Activated CD4-positive, alpha-beta T cell treated with anti-CD3 and anti-CD28 coated beads, Interleukin-2, amount 10 ng/mL, durations not matched to agents 24 days and 14 days (primary cell): ENCODE measurements at regions of chr11 and their contacts with region 1.

Region 1: GRCh38 chr11:81658722-81659121 is 1074.9 kb downstream of the FAM181B start:
- DNase-seq: peak; percentile 62
- H3K4me3 Mint-ChIP-seq: no peak overlapping the region
- H3K27ac Mint-ChIP-seq: no peak overlapping the region
- H3K4me1 Mint-ChIP-seq: no peaks in the 10 kb centered on the region
- H3K27me3 Mint-ChIP-seq: no peaks in the 10 kb centered on the region

Region 2: DNA sequence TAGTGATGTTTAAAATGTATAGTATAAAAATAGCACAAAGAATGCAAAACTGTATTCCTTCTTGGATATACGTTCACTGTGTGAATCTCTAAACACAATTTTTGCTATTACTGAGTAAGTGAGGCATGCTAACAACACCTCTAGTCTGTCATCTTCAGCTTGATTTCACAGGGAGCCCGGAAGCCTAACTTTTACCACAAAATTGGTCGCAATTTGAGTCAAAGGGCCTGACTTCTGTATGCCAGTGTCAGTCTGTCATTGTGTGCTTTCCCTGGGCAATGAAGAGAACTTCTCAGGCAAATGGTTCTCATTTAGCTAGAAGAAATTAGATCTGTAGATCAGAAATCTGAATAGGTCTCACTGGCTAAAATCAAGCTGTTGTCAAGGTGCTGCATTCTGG is 15.5 kb after region 1 on chr11:
- intact Hi-C with region 1: no loop called
- DNase-seq: peak; percentile 56
- H3K4me3 Mint-ChIP-seq: no peak overlapping the region
- H3K27ac Mint-ChIP-seq: no peak overlapping the region
- H3K4me1 Mint-ChIP-seq: no peaks in the 10 kb centered on the region
- H3K27me3 Mint-ChIP-seq: no peaks in the 10 kb centered on the region

Region 3: GRCh38 chr11:82038153-82038552 is 379.4 kb after region 1 on chr11:
- intact Hi-C with region 1: loop called (anchors 5 kb)
- DNase-seq: no peak
- H3K4me3 Mint-ChIP-seq: no peak overlapping the region
- H3K27ac Mint-ChIP-seq: no peak overlapping the region
- H3K4me1 Mint-ChIP-seq: no peaks in the 10 kb centered on the region
- H3K27me3 Mint-ChIP-seq: no peaks in the 10 kb centered on the region